Activated CD4-positive, alpha-beta T cell treated with anti-CD3 and anti-CD28 coated beads for 36 hours (primary cell): ENCODE measurements at regions of chr1 and their contacts with region 1.

Region 1: GRCh38 chr1:67285780-67286488 is 21.7 kb upstream of the IL12RB2 start:
- DNase-seq: peak; percentile 31
- ATAC-seq: peak; percentile 96
- H3K4me3 Mint-ChIP-seq: no peak overlapping the region
- H3K27ac Mint-ChIP-seq: peak overlapping the region; percentile 85
- H3K4me1 Mint-ChIP-seq: peaks cover 44% of the 10 kb centered on the region
- H3K27me3 Mint-ChIP-seq: peaks cover 2% of the 10 kb centered on the region

Region 2: DNA sequence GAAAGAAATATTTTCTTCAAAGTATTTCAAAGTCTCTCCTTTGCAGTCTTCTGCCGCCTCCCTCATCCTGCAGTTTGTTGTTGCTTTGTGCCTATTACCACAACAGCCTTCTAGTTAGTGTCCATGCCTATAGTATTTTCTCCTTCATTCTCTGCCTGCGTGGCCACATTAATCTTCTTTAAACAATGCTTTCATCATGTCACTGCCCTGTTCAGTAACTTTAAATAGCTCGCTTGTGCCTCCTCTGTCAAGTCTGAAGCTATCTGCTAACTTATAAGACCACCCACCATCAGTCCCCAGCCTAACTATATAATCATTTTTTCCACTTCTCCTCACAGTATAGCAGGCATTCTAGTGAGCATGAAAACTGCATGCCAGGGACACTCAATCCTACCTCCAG is 1202.9 kb before region 1 on chr1:
- CTCF ChIA-PET with region 1: no interaction called
- POLR2A ChIA-PET with region 1: no interaction called
- intact Hi-C with region 1: no loop called
- DNase-seq: no peak
- ATAC-seq: no peak
- H3K4me3 Mint-ChIP-seq: no peak overlapping the region
- H3K27ac Mint-ChIP-seq: no peak overlapping the region
- H3K4me1 Mint-ChIP-seq: no peaks in the 10 kb centered on the region
- H3K27me3 Mint-ChIP-seq: peaks cover 12% of the 10 kb centered on the region

Region 3: GRCh38 chr1:66978201-66978600 is 307.7 kb before region 1 on chr1:
- CTCF ChIA-PET with region 1: no interaction called
- POLR2A ChIA-PET with region 1: no interaction called
- intact Hi-C with region 1: no loop called
- DNase-seq: no peak
- ATAC-seq: no peak
- H3K4me3 Mint-ChIP-seq: no peak overlapping the region
- H3K27ac Mint-ChIP-seq: no peak overlapping the region
- H3K4me1 Mint-ChIP-seq: peaks cover 28% of the 10 kb centered on the region
- H3K27me3 Mint-ChIP-seq: no peaks in the 10 kb centered on the region

Region 4: DNA sequence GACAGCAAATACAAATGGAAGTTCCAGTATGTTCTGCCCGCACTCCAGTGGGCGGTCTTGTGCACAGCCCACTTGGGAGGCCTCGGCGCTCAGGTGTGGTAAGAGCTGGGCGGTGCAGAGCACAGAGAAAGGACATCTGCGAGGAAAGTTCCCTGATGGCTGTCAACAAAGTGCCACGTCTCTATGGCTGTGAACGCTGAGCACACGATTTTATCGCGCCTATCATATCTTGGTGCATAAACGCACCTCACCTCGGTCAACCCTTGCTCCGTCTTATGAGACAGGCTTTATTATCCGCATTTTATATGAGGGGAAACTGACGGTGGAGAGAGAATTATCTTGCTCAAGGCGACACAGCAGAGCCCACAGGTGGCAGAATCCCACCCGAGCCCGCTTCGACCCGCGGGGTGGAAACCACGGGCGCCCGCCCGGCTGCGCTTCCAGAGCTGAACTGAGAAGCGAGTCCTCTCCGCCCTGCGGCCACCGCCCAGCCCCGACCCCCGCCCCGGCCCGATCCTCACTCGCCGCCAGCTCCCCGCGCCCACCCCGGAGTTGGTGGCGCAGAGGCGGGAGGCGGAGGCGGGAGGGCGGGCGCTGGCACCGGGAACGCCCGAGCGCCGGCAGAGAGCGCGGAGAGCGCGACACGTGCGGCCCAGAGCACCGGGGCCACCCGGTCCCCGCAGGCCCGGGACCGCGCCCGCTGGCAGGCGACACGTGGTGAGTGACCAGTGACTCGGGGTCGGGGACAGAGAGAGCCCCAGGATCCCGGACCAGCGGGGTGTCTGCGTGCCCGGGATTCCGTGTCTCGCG is 21.5 kb after region 1 on chr1 and contains the start of gene IL12RB2:
- CTCF ChIA-PET with region 1: no interaction called
- POLR2A ChIA-PET with region 1: no interaction called
- intact Hi-C with region 1: loop called (anchors 1 to 2 kb)
- DNase-seq: peak; percentile 77
- ATAC-seq: peak; percentile 77
- H3K4me3 Mint-ChIP-seq: peak within 1 kb of the TSS; percentile 83
- H3K27ac Mint-ChIP-seq: peak within 1 kb of the TSS; percentile 90
- H3K4me1 Mint-ChIP-seq: peaks cover 48% of the 10 kb centered on the region
- H3K27me3 Mint-ChIP-seq: no peaks in the 10 kb centered on the region
- total RNA-seq, gene IL12RB2: 77.9 to 99.2 TPM

Region 5: DNA sequence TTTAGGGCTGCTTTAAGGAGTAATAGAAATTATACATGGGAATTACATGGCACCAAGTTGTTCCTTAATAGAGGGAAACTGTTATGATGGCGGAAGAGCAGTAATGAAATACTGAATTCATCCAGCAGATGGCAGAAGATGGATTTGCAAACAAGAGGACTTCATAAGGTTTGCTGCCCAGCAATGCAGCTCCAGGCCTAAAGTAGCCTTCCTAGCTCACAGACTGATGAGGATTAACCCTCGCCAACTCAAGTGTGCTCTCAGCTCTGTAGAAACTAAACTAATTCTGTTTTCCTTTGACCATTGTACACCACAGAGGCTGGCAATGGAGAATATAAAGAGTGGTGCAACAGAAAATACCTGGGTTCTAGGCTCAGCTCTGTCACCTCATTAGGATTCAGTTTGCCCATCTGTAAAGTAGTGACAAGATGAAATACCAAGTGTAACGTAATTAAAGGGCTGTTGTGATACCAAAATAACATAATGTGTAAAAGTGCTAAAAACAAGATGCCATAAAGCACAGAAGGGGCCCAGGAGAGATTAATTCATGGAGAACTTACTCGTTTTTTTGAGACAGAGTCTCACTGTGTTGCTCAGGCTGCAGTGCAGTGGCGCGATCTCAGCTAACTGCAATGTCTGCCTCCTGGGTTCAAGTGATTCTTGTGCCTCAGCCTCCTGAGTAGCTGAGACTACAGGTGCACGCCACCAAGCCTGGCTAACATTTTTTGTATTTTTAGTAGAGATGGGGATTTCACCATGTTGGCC is 246.7 kb after region 1 on chr1:
- CTCF ChIA-PET with region 1: no interaction called
- POLR2A ChIA-PET with region 1: no interaction called
- intact Hi-C with region 1: no loop called
- DNase-seq: peak; percentile 22
- ATAC-seq: no peak
- H3K4me3 Mint-ChIP-seq: no peak overlapping the region
- H3K27ac Mint-ChIP-seq: no peak overlapping the region
- H3K4me1 Mint-ChIP-seq: no peaks in the 10 kb centered on the region
- H3K27me3 Mint-ChIP-seq: peaks cover 8% of the 10 kb centered on the region